ENCODE measurements at regions of chr7 and their contacts with region 1.

Region 1: DNA sequence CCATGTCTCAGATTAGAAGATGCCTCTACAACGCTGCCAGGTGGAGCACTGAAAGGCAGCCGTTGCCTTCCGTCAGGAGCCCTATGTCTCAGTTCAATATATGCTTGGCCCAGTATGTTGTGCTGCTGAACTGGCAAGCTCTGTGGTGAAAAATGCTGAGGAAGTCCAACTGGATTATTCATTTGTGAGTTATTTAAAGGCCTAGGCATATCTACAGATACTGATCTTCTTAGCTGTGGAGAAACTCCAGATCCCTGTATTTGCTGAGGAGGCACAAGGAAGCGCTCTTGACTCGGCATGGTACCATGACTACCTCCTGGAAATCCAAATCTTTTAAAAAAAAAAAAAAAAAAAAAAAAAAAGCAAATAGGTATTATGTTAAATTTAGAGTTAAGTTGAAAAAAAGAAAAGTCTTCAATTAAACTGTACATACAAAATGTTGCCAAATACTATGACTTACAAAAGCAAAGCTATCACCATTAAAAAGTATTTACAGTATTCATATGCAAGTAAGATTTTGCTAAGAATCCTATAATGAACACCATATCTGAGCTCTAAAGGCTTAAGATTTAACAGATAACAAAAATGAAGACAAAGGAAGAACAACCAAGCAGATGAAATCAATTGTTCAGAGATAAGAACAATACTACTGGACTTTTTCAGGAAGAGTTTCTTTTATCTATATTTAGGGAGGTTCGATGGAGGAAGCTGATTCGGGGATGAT is 152.4 kb downstream of the GALNT11 start:
- DNase-seq: no peak
- H3K4me3 ChIP-seq: no peak overlapping the region
- H3K27ac ChIP-seq: no peak overlapping the region
- H3K4me1 ChIP-seq: no peaks in the 10 kb centered on the region
- H3K27me3 ChIP-seq: no peaks in the 10 kb centered on the region
- CTCF ChIP-seq: no peak

Region 2: DNA sequence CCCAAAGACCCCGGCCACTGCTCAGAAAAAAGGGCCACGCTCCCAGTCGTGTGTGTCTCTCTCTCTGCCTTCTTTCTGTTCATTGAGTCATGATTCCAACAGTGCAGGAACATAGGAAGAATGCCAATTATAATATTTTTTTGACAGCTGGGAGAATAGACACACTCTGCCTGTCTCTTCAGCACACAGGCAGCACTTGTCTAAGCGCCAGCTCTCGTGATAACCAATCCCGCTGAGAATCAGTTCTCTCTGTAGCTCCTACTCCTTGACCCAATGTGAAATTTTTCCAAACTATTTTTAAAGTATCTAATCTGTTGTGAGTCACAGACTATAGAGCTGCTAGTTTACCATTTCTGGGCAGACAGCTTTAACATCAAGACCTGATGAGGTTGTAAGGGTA is 512.5 kb before region 1 on chr7:
- CTCF ChIA-PET with region 1: no interaction called
- POLR2A ChIA-PET with region 1: no interaction called
- intact Hi-C with region 1: no loop called
- DNase-seq: no peak
- H3K4me3 ChIP-seq: no peak overlapping the region
- H3K27ac ChIP-seq: no peak overlapping the region
- H3K4me1 ChIP-seq: no peaks in the 10 kb centered on the region
- H3K27me3 ChIP-seq: no peaks in the 10 kb centered on the region
- CTCF ChIP-seq: no peak

Region 3: DNA sequence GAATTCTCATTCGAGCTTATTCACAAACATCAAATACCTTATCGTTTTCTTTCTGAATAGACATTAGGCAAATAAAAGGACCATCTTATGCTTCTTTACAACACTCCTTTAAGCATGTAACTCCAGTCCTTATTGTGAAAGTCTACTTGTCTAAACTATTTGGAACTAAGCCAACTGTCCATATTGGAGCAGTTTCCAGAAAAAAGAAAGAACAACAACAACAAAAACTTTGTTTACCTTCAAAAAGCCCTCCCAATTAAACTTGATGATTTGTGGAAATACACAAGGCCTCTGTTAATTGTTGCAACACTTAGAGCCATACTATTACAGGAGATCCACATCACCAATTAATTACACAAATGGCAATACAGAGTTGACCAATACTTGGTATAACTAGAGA is 11.2 kb after region 1 on chr7:
- CTCF ChIA-PET with region 1: no interaction called
- POLR2A ChIA-PET with region 1: interaction called, 16 read pairs
- intact Hi-C with region 1: no loop called
- DNase-seq: no peak
- H3K4me3 ChIP-seq: no peak overlapping the region
- H3K27ac ChIP-seq: no peak overlapping the region
- H3K4me1 ChIP-seq: no peaks in the 10 kb centered on the region
- H3K27me3 ChIP-seq: no peaks in the 10 kb centered on the region
- CTCF ChIP-seq: no peak

Measured in A673 (cell line).